ENCODE measurements at regions of chr9 and their contacts with region 1.

Region 1: DNA sequence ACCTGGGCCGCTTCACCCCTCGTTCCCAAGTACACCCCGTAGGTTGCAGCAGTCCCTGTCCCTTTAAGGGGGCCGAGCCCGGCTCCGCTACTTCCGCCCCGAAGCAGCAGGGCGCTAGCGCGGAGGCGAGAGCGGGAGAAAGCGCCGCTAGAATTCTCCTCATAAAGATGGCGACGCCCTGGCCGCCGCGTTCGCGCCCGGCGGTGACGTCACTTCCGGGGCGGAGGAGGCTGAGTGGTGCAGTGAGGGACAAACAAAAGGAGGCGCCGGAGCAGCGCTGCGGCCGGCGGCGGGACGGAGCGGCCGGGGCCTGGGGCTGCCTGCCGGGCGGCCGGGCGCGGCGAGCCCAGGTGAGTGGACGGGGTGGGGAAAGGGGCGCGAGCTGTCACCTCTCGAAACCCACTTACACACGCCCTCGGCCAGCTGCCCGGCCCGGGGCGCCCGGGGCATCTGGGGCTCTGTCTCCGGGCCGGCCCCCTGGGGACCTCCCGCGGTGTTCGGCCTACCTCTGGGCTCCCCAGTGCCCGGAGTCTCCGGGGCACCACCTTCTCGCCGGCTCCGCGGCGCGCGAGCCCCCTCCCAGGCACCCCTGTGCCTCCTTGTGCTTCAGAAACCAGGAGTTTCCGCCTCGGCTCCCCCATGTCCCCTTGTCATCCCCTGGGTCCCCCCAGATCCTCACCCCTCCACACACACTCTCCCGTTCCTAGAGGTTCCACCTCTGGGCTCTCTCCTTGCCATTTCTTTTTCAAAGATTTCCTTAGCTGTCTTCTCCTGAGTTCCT is at the starts of genes KYAT1 and LRRC8A:
- DNase-seq: peak; percentile 99
- H3K4me3 ChIP-seq: peak within 1 kb of the TSS; percentile 96
- H3K27ac ChIP-seq: peak within 1 kb of the TSS; percentile 96
- H3K4me1 ChIP-seq: peaks cover 9% of the 10 kb centered on the region
- H3K27me3 ChIP-seq: no peaks in the 10 kb centered on the region
- CTCF ChIP-seq: no peak
- total RNA-seq, gene KYAT1: 17.9 and 20.1 TPM in 2 replicates
- total RNA-seq, gene LRRC8A: 53.6 and 56.8 TPM in 2 replicates

Region 2: GRCh38 chr9:128921881-128922763 is 40.0 kb after region 1 on chr9:
- CTCF ChIA-PET with region 1: no interaction called
- POLR2A ChIA-PET with region 1: no interaction called
- intact Hi-C with region 1: loop called (anchors 5 kb)
- DNase-seq: peak; percentile 82
- H3K4me3 ChIP-seq: peak overlapping the region; percentile 47
- H3K27ac ChIP-seq: peak overlapping the region; percentile 89
- H3K4me1 ChIP-seq: peaks cover 33% of the 10 kb centered on the region
- H3K27me3 ChIP-seq: no peaks in the 10 kb centered on the region
- CTCF ChIP-seq: no peak

Measured in A673 (cell line).